Aorta (tissue), 5 donors: ENCODE measurements at regions of chr19 and their contacts with region 1.

Region 1: DNA sequence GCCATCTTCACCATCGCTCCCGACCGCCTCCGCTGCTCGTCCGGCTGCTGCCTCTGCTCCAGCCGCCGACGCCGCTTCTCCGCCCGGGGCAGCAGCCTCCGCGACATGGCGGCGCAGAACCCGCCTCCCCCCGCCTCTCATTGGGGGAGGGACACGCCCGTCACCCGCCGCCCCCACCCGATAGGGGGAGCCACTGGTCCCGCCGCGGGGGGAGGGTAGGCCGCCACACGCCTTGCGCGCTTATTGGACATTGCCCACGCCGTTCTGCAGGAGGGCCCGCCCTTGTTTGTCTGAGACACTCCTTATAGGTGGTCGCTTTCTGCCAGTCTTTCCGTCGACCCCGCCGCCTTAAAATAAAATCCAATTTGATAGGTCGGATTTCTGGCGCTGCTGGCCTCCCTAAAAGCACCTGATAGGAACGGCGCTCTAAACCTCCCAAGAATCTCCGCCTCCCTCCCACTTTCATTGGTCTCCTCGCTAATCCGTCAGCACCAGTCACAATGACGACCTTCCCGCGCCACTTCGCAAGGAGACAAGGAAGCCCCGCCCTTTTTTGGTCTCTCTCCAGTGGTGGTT is at the start of gene HNRNPL:
- DNase-seq: peak; percentile 99
- ATAC-seq: peak; percentile 91
- H3K4me3 ChIP-seq: peak within 1 kb of the TSS; percentile 78 to 97
- H3K27ac ChIP-seq: peak within 1 kb of the TSS; percentile 92 to 99
- H3K4me1 ChIP-seq: no peaks in the 10 kb centered on the region
- H3K27me3 ChIP-seq: no peaks in the 10 kb centered on the region
- total RNA-seq, gene HNRNPL: 220 TPM

Region 2: DNA sequence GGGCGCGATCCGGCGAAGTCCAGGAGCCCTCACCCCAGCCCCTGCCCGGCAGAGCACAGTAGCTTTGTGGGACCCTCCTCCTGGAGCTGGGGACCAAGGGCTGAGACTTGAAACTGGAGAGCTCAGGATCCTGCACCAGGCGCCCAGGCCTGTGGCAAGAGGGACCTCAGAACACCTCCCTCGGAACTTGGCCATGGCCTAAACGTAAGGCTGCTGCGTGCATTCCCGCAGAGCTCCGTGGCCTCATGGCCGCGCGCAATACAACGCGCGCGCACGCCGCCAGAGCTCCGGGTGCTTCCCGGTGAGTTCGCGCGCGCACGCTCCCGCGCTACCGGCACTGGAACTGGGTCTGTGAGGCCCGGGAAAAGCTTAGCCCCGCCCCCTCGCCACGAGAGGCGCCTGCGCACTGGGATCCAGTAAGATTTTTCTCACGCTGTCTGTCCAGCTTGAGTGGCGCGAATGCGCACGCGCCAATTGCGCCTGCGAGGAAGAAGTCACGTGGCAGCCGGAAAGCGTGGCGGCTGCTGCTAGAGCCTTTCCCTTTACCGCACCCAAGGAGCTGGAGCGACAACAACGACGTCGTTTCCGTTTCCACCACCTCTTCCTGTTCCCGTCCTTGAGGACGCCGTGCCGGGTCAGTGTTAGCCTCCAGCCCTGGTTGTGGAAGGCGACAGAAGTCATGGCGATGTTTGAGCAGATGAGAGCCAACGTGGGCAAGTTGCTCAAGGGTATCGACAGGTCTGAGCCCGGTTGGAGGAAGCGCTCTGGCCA is 231.2 kb before region 1 on chr19 and contains the start of gene EIF3K:
- intact Hi-C with region 1: loop called in 1 of 2 experiments (anchors 5 kb)
- DNase-seq: peak; percentile 99 to 100
- ATAC-seq: peak; percentile 99
- H3K4me3 ChIP-seq: peak within 1 kb of the TSS; percentile 65 to 86
- H3K27ac ChIP-seq: peak within 1 kb of the TSS in 1 of 2 donors; percentile 34
- H3K4me1 ChIP-seq: no peaks in the 10 kb centered on the region
- H3K27me3 ChIP-seq: no peaks in the 10 kb centered on the region
- total RNA-seq, gene EIF3K: 171 to 183 TPM

Region 3: GRCh38 chr19:38647368-38647965 is 202.5 kb before region 1 on chr19 and contains the start of gene ACTN4:
- intact Hi-C with region 1: loop called in 1 of 2 experiments (anchors 5 kb)
- DNase-seq: peak; percentile 99 to 100
- ATAC-seq: peak; percentile 94
- H3K4me3 ChIP-seq: peak within 1 kb of the TSS; percentile 98 to 100
- H3K27ac ChIP-seq: peak within 1 kb of the TSS; percentile 95 to 97
- H3K4me1 ChIP-seq: peaks cover 0 to 3% of the 10 kb centered on the region in 2 donors
- H3K27me3 ChIP-seq: no peaks in the 10 kb centered on the region
- total RNA-seq, gene ACTN4: 794 to 1,985 TPM

Region 4: GRCh38 chr19:38718747-38719543 is 131.0 kb before region 1 on chr19:
- intact Hi-C with region 1: loop called in 1 of 2 experiments (anchors 5 kb)
- DNase-seq: peak; percentile 88 to 92
- ATAC-seq: peak; percentile 63
- H3K4me3 ChIP-seq: no peak overlapping the region
- H3K27ac ChIP-seq: peak overlapping the region in 1 of 2 donors; percentile 77
- H3K4me1 ChIP-seq: no peaks in the 10 kb centered on the region
- H3K27me3 ChIP-seq: no peaks in the 10 kb centered on the region

Region 5: GRCh38 chr19:38799071-38799744 is 50.7 kb before region 1 on chr19:
- intact Hi-C with region 1: no loop called
- DNase-seq: peak in 1 of 2 donors; percentile 51
- ATAC-seq: no peak
- H3K4me3 ChIP-seq: no peak overlapping the region
- H3K27ac ChIP-seq: no peak overlapping the region
- H3K4me1 ChIP-seq: no peaks in the 10 kb centered on the region
- H3K27me3 ChIP-seq: no peaks in the 10 kb centered on the region

Region 6: GRCh38 chr19:38831142-38831605 is 18.8 kb before region 1 on chr19:
- intact Hi-C with region 1: loop called in 1 of 2 experiments (anchors 1 kb)
- DNase-seq: peak; percentile 81 to 88
- ATAC-seq: peak; percentile 64
- H3K4me3 ChIP-seq: peak overlapping the region; percentile 42 to 43
- H3K27ac ChIP-seq: peak overlapping the region in 1 of 2 donors; percentile 78
- H3K4me1 ChIP-seq: peaks cover 0 to 2% of the 10 kb centered on the region in 2 donors
- H3K27me3 ChIP-seq: no peaks in the 10 kb centered on the region

Region 7: DNA sequence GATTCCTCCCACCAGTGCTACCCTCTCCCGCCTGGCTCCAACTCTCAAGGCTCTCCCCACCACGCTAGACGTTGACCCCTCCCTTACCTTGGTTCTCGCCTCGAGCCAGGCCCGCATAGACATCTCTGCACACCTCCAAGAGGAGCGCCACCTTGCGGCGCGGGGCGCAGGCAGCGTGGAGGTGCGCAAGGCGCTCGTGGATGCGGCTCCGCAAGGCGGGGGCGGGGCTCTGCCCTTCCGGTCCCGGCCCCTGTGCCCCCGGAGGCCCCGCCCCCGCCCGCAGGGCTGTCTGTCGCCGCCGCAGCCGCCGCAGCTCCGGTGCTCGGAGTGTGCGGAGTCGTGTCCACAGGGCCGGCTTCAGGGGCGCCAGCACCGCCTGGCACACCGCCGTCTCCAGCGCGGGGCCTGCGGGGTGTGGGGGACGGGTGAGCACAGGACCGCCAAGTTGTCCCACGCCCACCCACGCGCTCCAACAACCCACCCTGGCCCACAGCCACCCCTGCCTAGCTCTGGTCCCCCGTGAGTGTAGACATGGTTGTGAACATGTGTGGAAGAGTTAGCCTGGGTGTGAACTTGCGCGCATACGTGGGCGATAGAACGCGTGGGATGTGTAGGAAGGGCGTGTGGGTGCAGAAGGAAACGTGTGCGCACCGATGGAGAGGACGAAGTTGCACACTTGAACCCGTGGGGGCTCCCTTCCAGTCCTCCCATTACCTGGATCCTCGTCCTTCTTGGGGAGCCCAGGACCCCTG is 20.1 kb after region 1 on chr19:
- intact Hi-C with region 1: no loop called
- DNase-seq: peak; percentile 90 to 94
- ATAC-seq: peak; percentile 91
- H3K4me3 ChIP-seq: peak overlapping the region in 1 of 2 donors; percentile 12
- H3K27ac ChIP-seq: no peak overlapping the region
- H3K4me1 ChIP-seq: no peaks in the 10 kb centered on the region
- H3K27me3 ChIP-seq: no peaks in the 10 kb centered on the region

Region 8: GRCh38 chr19:39098365-39099269 is 248.7 kb after region 1 on chr19:
- intact Hi-C with region 1: no loop called
- DNase-seq: no peak
- ATAC-seq: no peak
- H3K4me3 ChIP-seq: no peak overlapping the region
- H3K27ac ChIP-seq: no peak overlapping the region
- H3K4me1 ChIP-seq: no peaks in the 10 kb centered on the region
- H3K27me3 ChIP-seq: no peaks in the 10 kb centered on the region